ENCODE measurements at regions of chr4 and their contacts with region 1.

Region 1: DNA sequence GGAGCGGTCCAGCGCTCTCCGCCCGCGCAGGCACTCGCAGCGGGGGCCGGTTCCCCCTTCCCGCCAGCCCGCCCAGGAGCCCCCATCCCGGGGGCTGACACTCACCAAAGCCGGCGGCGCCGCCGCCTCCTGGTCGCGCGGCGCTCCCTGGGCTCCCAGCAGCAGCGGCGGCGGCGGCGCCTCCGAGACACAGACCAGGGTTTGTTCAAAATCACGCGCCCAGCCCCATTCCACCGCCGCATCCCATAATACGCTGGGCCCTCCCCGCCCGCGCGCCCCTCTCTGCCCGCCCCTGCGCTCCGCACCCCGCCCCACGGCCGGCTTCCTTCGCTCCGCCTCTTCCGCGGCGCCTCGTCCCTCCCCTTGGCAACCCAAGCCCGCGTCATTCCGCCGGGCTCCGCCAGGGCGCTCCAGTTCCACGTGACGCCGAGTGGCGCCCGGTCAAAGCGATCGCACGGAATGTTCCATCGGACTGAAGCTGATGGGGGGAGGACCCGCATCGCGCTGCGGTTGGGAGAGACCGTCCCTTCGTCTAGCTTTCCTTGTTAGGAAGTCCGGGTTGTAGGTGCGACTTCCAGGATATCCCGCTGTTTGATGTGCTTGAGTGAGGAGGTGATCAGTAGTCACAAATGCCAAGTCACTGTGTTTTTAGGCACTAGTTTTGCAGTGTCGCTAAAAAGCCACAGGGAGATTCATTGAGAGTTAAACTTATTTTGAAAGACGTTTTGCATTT is 2.2 kb upstream of the LIN54 start:
- DNase-seq: peak; percentile 94 to 98
- H3K4me3 ChIP-seq: peak overlapping the region; percentile 74 to 75
- H3K27ac ChIP-seq: peak overlapping the region; percentile 75 to 87
- H3K4me1 ChIP-seq: peaks cover 0 to 28% (median 19%) of the 10 kb centered on the region in 4 donors
- H3K27me3 ChIP-seq: no peaks in the 10 kb centered on the region
- CTCF ChIP-seq: peak; percentile 71 to 76

Region 2: GRCh38 chr4:82780751-82781231 is 232.1 kb before region 1 on chr4:
- intact Hi-C with region 1: no loop called
- DNase-seq: peak; percentile 68 to 81
- H3K4me3 ChIP-seq: no peak overlapping the region
- H3K27ac ChIP-seq: no peak overlapping the region
- H3K4me1 ChIP-seq: peaks cover 0 to 10% (median 4%) of the 10 kb centered on the region in 4 donors
- H3K27me3 ChIP-seq: no peaks in the 10 kb centered on the region
- CTCF ChIP-seq: no peak

Region 3: DNA sequence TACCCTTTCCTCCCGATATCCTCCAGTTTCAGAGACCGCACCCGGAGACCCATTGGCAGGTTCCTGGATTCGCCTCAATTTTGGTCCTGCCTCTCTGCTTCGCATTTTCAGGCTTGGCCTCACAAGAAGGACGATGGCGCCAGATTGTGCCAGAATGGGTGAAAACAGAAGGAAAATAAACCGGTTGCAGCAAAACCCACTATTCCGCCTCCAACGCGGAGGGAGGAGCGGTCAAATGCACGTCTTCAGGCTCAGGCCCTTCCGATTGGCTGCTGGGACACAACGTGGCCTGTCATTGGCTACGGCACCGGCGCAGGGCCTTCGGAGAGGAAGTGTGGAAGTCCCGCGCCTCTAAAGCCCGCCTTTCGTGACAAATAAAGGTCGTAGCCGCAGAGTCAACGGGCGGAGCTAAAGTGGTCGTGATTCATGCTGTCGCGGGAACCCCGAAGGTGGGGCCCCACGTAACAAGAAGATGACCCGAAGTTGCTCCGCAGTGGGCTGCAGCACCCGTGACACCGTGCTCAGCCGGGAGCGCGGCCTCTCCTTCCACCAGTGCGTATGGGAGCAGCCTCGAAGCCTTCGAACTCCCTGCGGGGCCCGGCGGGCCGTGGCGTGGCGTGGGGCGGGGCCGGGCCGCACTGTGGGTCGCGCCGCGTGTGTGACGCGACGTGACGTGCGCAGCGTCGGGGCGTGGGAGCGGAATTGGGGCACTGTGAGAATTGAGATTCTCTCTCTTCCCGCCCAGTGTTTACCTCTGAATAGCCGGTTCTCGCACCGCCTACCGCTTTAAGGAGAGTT is 112.3 kb before region 1 on chr4 and contains the start of gene THAP9:
- intact Hi-C with region 1: loop called (anchors 5 kb)
- DNase-seq: peak; percentile 99
- H3K4me3 ChIP-seq: peak within 1 kb of the TSS; percentile 60 to 68
- H3K27ac ChIP-seq: peak within 1 kb of the TSS; percentile 91 to 93
- H3K4me1 ChIP-seq: peaks cover 0 to 41% (median 19%) of the 10 kb centered on the region in 4 donors
- H3K27me3 ChIP-seq: no peaks in the 10 kb centered on the region
- CTCF ChIP-seq: no peak

Region 4: GRCh38 chr4:83108121-83108861 is 95.4 kb after region 1 on chr4:
- intact Hi-C with region 1: no loop called
- DNase-seq: no peak
- H3K4me3 ChIP-seq: no peak overlapping the region
- H3K27ac ChIP-seq: no peak overlapping the region
- H3K4me1 ChIP-seq: peaks cover 0 to 14% (median 12%) of the 10 kb centered on the region in 4 donors
- H3K27me3 ChIP-seq: no peaks in the 10 kb centered on the region
- CTCF ChIP-seq: no peak

Region 5: DNA sequence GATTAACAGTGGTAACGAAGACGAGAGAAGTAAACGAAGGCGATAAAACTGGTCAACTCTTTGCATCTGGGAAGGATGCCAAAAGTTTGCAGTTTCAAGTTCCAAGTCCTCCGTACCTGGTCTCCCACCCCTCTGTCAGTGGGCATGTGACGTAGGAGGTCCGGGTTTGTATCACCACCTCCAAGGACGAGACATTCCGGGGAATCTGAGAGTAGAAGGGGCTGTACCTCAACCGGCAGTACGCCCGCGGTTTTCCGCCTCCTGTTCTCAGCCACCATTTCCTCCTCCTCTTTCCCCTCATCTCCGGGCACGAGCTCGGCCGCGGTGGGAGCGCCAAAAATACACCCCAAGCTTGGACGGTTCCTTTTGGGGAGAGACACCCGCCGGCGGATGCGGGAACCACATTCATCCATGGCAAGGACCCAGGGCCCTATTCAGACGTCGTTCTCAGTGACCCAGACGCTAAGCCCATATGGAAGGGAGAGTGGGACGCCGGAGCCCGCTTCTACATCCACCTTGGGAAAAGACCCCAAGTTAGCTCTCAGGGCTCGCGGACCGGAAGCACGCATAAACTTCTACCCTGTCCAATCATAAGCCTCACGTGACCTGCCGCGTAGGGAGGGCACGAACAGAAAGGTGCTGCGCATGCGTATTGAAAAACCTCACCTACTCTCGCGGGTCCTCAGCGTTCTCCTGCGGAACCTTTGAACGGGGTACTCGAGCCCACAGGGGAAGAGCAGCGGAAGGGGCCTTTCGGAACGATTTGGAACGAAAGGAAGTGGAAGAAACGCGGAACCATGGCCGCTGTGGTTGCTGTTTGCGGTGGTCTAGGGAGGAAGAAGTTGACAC is 442.7 kb after region 1 on chr4 and contains the starts of genes HELQ and MRPS18C:
- intact Hi-C with region 1: loop called (anchors 10 kb)
- DNase-seq: peak; percentile 98 to 99
- H3K4me3 ChIP-seq: peak within 1 kb of the TSS; percentile 75 to 91
- H3K27ac ChIP-seq: peak within 1 kb of the TSS; percentile 95 to 98
- H3K4me1 ChIP-seq: peaks cover 0 to 29% (median 26%) of the 10 kb centered on the region in 4 donors
- H3K27me3 ChIP-seq: no peaks in the 10 kb centered on the region
- CTCF ChIP-seq: peak in 1 of 2 experiments; percentile 20